CD8-positive, alpha-beta T cell (primary cell): ENCODE measurements at regions of chr19 and their contacts with region 1.

Region 1: DNA sequence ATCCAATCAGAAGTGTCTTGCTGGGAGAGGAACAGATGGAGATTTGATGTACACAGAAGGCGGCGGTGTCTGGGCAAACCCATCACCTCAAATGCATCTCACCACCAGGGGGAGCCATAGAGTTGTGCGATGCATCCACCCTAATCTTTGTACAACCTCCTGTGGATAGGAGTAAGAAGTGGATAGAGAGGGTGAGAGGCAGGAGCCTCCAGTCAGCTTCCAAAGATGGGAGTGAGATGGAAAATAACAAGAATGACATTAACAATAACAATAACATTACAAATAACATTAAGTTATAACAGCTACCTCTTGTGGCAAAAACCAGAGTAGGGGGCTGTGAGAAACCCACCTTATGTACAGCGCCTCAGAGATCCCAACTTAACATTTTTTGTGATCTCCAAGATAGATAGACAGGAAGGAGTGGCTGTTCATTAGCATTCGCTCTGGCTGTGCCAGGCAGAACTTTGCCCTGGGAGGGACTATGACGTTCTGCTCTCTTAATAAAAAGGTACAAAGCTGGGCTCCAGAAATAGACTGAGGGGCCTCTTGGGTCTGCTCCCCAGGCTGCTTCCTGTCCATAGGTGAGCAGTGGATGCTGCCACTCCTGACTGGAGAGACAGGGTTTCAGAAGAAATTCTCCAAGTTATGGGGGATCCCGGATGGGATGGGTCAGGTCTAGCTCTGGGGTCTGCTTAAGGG is 5.2 kb upstream of the CEACAM18 start:
- DNase-seq: peak; percentile 49 to 90 (median 78)
- ATAC-seq: peak; percentile 44
- H3K4me3 ChIP-seq: no peak overlapping the region
- H3K4me3 Mint-ChIP-seq: no peak overlapping the region
- H3K27ac ChIP-seq: no peak overlapping the region
- H3K27ac Mint-ChIP-seq: no peak overlapping the region
- H3K4me1 ChIP-seq: no peaks in the 10 kb centered on the region
- H3K4me1 Mint-ChIP-seq: no peaks in the 10 kb centered on the region
- H3K27me3 ChIP-seq: peaks cover 0 to 5% of the 10 kb centered on the region in 2 experiments
- H3K27me3 Mint-ChIP-seq: peaks cover 27% of the 10 kb centered on the region
- CTCF ChIP-seq: peak; percentile 92

Region 2: GRCh38 chr19:50401605-50402450 is 1071.3 kb before region 1 on chr19:
- CTCF ChIA-PET with region 1: no interaction called
- POLR2A ChIA-PET with region 1: no interaction called
- intact Hi-C with region 1: no loop called
- DNase-seq: no peak
- ATAC-seq: no peak
- H3K4me3 ChIP-seq: no peak overlapping the region
- H3K4me3 Mint-ChIP-seq: no peak overlapping the region
- H3K27ac ChIP-seq: no peak overlapping the region
- H3K27ac Mint-ChIP-seq: no peak overlapping the region
- H3K4me1 ChIP-seq: no peaks in the 10 kb centered on the region
- H3K4me1 Mint-ChIP-seq: peaks cover 3% of the 10 kb centered on the region
- H3K27me3 ChIP-seq: no peaks in the 10 kb centered on the region
- H3K27me3 Mint-ChIP-seq: no peaks in the 10 kb centered on the region
- CTCF ChIP-seq: no peak

Region 3: GRCh38 chr19:51441410-51442390 is 31.5 kb before region 1 on chr19:
- CTCF ChIA-PET with region 1: interaction called, 17 read pairs
- POLR2A ChIA-PET with region 1: no interaction called
- intact Hi-C with region 1: no loop called
- DNase-seq: peak; percentile 56 to 95 (median 81)
- ATAC-seq: peak; percentile 91
- H3K4me3 ChIP-seq: peak overlapping the region; percentile 21 to 32
- H3K4me3 Mint-ChIP-seq: peak overlapping the region; percentile 75
- H3K27ac ChIP-seq: peak overlapping the region; percentile 24 to 83
- H3K27ac Mint-ChIP-seq: peak overlapping the region; percentile 93
- H3K4me1 ChIP-seq: peaks cover 31% of the 10 kb centered on the region
- H3K4me1 Mint-ChIP-seq: peaks cover 43% of the 10 kb centered on the region
- H3K27me3 ChIP-seq: peaks cover 0 to 2% of the 10 kb centered on the region in 2 experiments
- H3K27me3 Mint-ChIP-seq: peaks cover 7% of the 10 kb centered on the region
- CTCF ChIP-seq: peak; percentile 27

Region 4: DNA sequence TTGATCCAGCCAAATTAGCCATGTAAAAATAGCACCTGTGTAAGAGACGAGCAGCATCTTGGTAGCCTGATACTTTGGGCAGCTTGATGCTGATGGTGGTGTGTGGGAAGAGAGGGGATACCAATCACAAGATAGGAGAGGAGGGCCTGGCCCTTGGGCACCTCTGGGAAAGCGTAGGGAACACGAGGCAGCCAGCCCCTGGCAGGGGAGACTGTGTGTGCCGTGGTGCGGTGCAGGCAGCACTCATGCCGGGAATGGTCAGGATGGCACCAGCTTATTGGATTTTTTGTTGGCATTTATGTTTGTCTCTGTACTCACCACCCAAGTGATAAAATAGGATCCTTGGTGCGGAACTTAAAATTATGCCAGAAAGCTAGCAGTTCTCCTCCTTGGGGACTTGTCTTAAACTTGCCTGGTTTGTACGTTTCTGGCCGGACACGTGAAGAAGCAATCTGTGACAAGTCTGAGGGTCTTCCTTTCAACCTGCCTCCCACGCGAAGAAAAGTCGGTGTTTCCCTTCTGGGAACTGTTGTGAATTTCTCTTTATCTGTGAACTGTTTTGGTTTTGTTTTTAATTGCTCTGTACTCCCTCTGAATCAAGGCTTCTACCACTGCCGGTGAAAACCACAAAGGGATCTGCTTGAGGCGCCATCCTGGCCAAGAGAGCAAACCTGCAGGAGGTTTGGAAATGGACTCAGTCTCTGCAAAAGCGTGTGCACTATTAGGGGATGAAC is 25.0 kb before region 1 on chr19:
- CTCF ChIA-PET with region 1: interaction called, 17 read pairs
- POLR2A ChIA-PET with region 1: no interaction called
- intact Hi-C with region 1: no loop called
- DNase-seq: peak in 2 of 9 experiments; percentile 26 to 47
- ATAC-seq: no peak
- H3K4me3 ChIP-seq: peak overlapping the region; percentile 12 to 14
- H3K4me3 Mint-ChIP-seq: peak overlapping the region; percentile 30
- H3K27ac ChIP-seq: no peak overlapping the region
- H3K27ac Mint-ChIP-seq: peak overlapping the region; percentile 1
- H3K4me1 ChIP-seq: peaks cover 17% of the 10 kb centered on the region
- H3K4me1 Mint-ChIP-seq: peaks cover 14% of the 10 kb centered on the region
- H3K27me3 ChIP-seq: no peaks in the 10 kb centered on the region
- H3K27me3 Mint-ChIP-seq: peaks cover 2% of the 10 kb centered on the region
- CTCF ChIP-seq: no peak

Region 5: DNA sequence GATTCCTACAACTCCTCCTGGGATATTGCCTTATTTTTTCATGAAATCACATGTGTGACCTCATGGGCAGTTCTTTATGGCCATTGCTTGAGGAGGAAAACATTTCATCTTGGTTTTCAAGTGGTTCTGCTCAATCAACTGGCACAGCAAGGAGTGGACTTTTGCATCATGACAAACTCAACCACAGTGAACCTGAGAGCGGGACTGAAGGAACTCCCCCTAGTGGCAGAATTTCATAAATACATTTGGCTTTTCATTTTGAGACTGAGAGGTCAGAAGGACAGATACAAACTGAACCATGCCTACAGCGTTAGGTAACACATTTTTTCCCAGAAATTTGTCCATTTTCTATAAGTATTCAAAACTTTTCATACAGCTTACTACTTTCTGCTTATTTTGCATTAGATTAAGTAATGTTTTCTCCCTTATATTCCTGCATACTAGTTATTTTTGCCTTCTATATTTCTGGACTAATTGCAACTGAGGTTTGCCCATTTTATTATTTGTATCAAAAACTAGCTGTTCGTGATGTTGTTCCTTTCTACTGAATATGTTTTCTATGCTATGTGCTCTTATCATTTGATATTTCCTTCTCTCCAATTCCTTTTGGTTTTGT is 41.8 kb after region 1 on chr19:
- CTCF ChIA-PET with region 1: interaction called, 23 read pairs
- POLR2A ChIA-PET with region 1: no interaction called
- intact Hi-C with region 1: loop called in 1 of 2 experiments (anchors 1 kb)
- DNase-seq: peak in 5 of 9 experiments; percentile 4 to 68 (median 20)
- ATAC-seq: no peak
- H3K4me3 ChIP-seq: no peak overlapping the region
- H3K4me3 Mint-ChIP-seq: no peak overlapping the region
- H3K27ac ChIP-seq: no peak overlapping the region
- H3K27ac Mint-ChIP-seq: no peak overlapping the region
- H3K4me1 ChIP-seq: no peaks in the 10 kb centered on the region
- H3K4me1 Mint-ChIP-seq: no peaks in the 10 kb centered on the region
- H3K27me3 ChIP-seq: no peaks in the 10 kb centered on the region
- H3K27me3 Mint-ChIP-seq: peaks cover 28% of the 10 kb centered on the region
- CTCF ChIP-seq: peak; percentile 83

Region 6: GRCh38 chr19:51660975-51661600 is 187.9 kb after region 1 on chr19:
- CTCF ChIA-PET with region 1: interaction called, 27 read pairs
- POLR2A ChIA-PET with region 1: no interaction called
- intact Hi-C with region 1: loop called in 1 of 2 experiments (anchors 1 kb)
- DNase-seq: peak in 5 of 9 experiments; percentile 41 to 54 (median 53)
- ATAC-seq: no peak
- H3K4me3 ChIP-seq: no peak overlapping the region
- H3K4me3 Mint-ChIP-seq: no peak overlapping the region
- H3K27ac ChIP-seq: no peak overlapping the region
- H3K27ac Mint-ChIP-seq: no peak overlapping the region
- H3K4me1 ChIP-seq: peaks cover 3% of the 10 kb centered on the region
- H3K4me1 Mint-ChIP-seq: peaks cover 5% of the 10 kb centered on the region
- H3K27me3 ChIP-seq: peaks cover 0 to 6% of the 10 kb centered on the region in 2 experiments
- H3K27me3 Mint-ChIP-seq: peaks cover 35% of the 10 kb centered on the region
- CTCF ChIP-seq: peak; percentile 17

Region 7: DNA sequence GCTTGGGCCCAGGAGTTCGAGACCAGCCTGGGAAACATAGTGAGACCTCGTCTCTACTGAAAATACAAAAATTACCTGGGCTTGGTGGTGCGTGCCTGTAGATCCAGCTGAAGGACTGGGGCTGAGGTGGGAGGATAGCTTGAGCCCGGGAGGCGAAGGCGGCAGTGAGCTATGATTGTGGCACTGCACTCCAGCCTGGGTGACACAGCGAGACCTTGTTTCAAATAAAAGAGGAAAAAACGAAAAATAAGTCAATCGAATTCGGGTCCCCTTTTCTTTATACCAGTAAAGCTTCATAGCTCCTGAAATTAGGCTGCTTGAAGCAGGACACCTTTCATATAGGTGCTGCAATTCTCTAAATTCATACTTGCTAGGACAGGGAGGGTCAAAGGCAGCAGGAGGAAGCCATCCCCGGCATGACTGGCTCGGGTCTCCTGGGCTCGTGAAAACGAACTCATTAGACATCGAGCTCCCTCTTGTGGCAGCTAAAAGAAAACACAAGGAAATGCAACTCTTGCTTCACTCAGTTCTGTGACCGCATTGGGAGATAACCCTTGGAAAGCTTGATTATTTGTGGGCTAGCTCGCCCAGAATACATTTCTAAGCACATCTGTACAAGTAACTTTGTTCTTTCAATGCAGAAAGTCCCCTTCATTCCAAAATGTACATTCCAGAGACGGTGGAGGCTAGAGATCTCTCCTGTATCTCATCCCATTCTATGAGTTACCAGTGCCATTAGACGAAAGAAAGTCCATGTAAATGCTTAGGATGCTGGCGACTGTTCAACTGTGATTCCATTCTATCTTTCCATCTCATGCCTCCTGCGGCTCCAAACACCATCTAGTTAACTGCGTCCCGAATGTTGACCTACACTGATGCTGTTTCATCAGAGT is 304.7 kb after region 1 on chr19:
- CTCF ChIA-PET with region 1: interaction called, 26 read pairs
- POLR2A ChIA-PET with region 1: no interaction called
- intact Hi-C with region 1: loop called (anchors 1 to 2 kb)
- DNase-seq: peak in 8 of 9 experiments; percentile 10 to 73 (median 32)
- ATAC-seq: no peak
- H3K4me3 ChIP-seq: no peak overlapping the region
- H3K4me3 Mint-ChIP-seq: no peak overlapping the region
- H3K27ac ChIP-seq: no peak overlapping the region
- H3K27ac Mint-ChIP-seq: no peak overlapping the region
- H3K4me1 ChIP-seq: no peaks in the 10 kb centered on the region
- H3K4me1 Mint-ChIP-seq: peaks cover 5% of the 10 kb centered on the region
- H3K27me3 ChIP-seq: peaks cover 0 to 3% of the 10 kb centered on the region in 2 experiments
- H3K27me3 Mint-ChIP-seq: peaks cover 63% of the 10 kb centered on the region
- CTCF ChIP-seq: peak; percentile 69